ENCODE measurements at regions of chr2 and their contacts with region 1.

Region 1: DNA sequence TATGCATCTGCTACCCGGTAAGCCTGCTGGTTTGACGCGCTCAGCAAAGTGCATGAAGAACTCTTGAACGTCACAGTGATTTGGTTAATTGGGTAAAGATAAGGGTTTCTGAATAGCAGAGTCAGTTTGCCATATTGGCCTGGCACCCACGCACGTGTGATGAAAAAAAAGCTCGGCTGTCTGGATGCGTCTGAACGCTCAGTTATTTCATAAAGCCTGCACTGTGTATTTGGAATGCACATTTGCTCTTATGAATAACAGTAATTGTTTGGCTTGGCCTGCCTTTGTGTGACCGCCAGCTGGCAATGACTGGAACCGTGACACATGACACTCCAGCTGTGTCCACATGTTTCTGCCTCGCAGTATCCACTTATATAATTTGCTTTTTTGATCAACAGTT is 129.2 kb upstream of the MEIS1 start:
- DNase-seq: peak; percentile 20 to 56
- ATAC-seq: peak; percentile 26 to 46
- H3K4me3 ChIP-seq: no peak overlapping the region
- H3K27ac ChIP-seq: no peak overlapping the region
- H3K4me1 ChIP-seq: peaks cover 6 to 11% of the 10 kb centered on the region in 2 donors
- H3K27me3 ChIP-seq: peaks cover 0 to 2% (median 0%) of the 10 kb centered on the region in 3 donors
- CTCF ChIP-seq: no peak
- POLR2A ChIP-seq: no peak

Region 2: DNA sequence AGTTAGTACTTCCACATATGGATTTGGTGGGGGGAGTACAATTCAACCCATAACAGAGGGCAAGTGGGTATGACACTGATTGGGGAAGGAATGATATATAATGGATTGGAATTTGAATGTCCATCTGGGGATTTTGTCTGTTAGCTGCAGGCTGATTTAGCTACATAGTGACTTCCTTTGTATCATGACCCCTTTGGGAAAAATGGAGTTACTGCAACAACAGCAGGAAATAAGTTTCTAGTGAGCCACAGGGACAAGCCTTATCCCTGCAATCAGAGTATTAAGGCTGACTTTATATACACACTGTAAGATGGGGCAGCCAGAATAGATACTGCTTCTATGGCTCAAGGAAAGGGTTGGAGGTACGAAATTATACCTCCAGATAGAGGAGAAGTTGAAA is 275.2 kb before region 1 on chr2:
- in situ Hi-C with region 1: no loop called
- intact Hi-C with region 1: loop called (anchors 10 kb)
- DNase-seq: no peak
- ATAC-seq: no peak
- H3K4me3 ChIP-seq: no peak overlapping the region
- H3K27ac ChIP-seq: peak overlapping the region in 1 of 4 donors; percentile 72
- H3K4me1 ChIP-seq: peaks cover 18 to 22% of the 10 kb centered on the region in 2 donors
- H3K27me3 ChIP-seq: no peaks in the 10 kb centered on the region
- CTCF ChIP-seq: peak in 1 of 5 experiments; percentile 18
- POLR2A ChIP-seq: no peak

Region 3: GRCh38 chr2:66389651-66390131 is 84.0 kb after region 1 on chr2:
- in situ Hi-C with region 1: no loop called
- intact Hi-C with region 1: no loop called
- DNase-seq: no peak
- ATAC-seq: no peak
- H3K4me3 ChIP-seq: no peak overlapping the region
- H3K27ac ChIP-seq: no peak overlapping the region
- H3K4me1 ChIP-seq: no peaks in the 10 kb centered on the region
- H3K27me3 ChIP-seq: no peaks in the 10 kb centered on the region
- CTCF ChIP-seq: no peak
- POLR2A ChIP-seq: no peak

Region 4: DNA sequence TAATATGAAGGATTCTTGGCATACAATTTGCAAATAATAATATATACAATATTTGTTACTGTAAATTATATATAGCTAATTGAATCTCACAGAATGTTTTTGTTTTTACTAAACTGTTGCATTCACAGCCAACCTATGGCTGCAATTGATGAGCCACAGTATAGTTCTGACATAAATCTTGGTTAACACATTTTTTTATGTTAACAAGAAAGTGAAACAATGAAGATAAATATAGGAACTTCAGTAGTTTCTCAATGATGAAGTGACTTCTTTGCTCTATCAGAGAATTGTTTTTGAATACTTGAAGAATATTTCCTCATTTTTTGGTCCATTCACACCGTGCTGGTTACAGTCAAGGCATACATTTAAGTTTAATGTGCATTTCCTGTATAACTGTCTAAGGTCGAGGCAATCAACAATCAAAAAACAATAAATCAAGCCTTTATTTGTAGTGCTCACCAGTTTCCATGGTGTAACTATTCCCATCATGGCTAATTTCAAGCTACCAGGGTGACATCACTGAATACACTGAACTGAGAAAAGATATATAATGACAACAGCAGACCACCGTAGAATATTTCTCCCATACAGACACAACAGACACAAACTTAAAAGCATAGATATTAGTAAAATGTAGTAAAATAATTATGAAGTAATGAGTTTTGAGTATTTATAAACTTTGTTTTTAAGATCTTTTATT is 1078.6 kb after region 1 on chr2:
- in situ Hi-C with region 1: no loop called
- intact Hi-C with region 1: loop called (anchors 5 kb)
- DNase-seq: no peak
- ATAC-seq: no peak
- H3K4me3 ChIP-seq: no peak overlapping the region
- H3K27ac ChIP-seq: no peak overlapping the region
- H3K4me1 ChIP-seq: no peaks in the 10 kb centered on the region
- H3K27me3 ChIP-seq: no peaks in the 10 kb centered on the region
- CTCF ChIP-seq: no peak
- POLR2A ChIP-seq: no peak